Ovary (tissue), 10 donors: ENCODE measurements at regions of chr7 and their contacts with region 1.

Region 1: GRCh38 chr7:139321071-139321745 is 19.9 kb upstream of the FMC1 start:
- DNase-seq: no peak
- H3K4me3 ChIP-seq: no peak overlapping the region
- H3K27ac ChIP-seq: no peak overlapping the region
- H3K4me1 ChIP-seq: no peaks in the 10 kb centered on the region
- H3K27me3 ChIP-seq: no peaks in the 10 kb centered on the region
- CTCF ChIP-seq: no peak
- EP300 ChIP-seq: no peak
- POLR2A ChIP-seq: no peak

Region 2: DNA sequence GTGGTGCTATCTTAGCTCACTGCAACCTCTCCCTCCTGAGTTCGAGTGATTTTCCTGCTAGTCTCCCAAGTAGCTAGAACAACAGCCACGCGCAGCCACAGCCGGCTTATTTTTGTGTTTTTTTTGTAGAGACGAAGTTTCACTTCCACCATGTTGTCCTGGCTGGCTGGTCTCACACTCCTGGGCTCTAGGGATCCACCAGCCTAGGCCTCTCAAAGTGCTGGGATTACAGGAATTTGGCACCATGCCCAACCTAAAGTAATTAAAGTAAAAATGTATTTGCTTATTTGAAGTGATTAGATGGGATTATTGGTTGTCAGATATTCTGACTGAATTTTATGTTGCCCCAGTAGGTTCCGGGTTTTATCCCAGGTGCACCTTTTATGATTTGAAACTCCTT is 61.2 kb after region 1 on chr7:
- intact Hi-C with region 1: loop called in 1 of 4 experiments (anchors 10 kb)
- DNase-seq: no peak
- H3K4me3 ChIP-seq: no peak overlapping the region
- H3K27ac ChIP-seq: no peak overlapping the region
- H3K4me1 ChIP-seq: no peaks in the 10 kb centered on the region
- H3K27me3 ChIP-seq: no peaks in the 10 kb centered on the region
- CTCF ChIP-seq: no peak
- EP300 ChIP-seq: no peak
- POLR2A ChIP-seq: no peak

Region 3: DNA sequence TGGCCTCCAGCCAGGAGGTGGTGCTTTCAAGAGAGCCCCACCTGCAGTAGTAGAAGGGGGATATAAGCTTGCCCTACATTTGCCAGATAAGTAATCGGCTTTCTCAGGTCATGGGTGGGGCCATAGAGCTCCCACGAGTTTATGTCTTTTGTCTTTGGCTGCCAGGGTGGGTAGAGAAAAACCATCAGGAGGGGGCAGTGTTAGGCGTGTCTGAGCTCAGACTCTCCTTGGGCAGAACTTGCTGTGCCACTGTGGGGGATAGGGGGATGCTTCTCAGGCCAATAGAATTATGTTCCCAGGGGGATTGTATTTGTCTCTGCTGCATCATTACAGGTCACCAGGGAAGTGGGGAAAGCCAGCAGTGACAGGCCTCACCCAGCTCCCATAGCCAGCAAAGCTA is 1705.8 kb after region 1 on chr7:
- intact Hi-C with region 1: no loop called
- DNase-seq: no peak
- H3K4me3 ChIP-seq: no peak overlapping the region
- H3K27ac ChIP-seq: no peak overlapping the region
- H3K4me1 ChIP-seq: no peaks in the 10 kb centered on the region
- H3K27me3 ChIP-seq: no peaks in the 10 kb centered on the region
- CTCF ChIP-seq: no peak
- EP300 ChIP-seq: no peak
- POLR2A ChIP-seq: no peak